ENCODE measurements at regions of chr10 and their contacts with region 1.

Region 1: DNA sequence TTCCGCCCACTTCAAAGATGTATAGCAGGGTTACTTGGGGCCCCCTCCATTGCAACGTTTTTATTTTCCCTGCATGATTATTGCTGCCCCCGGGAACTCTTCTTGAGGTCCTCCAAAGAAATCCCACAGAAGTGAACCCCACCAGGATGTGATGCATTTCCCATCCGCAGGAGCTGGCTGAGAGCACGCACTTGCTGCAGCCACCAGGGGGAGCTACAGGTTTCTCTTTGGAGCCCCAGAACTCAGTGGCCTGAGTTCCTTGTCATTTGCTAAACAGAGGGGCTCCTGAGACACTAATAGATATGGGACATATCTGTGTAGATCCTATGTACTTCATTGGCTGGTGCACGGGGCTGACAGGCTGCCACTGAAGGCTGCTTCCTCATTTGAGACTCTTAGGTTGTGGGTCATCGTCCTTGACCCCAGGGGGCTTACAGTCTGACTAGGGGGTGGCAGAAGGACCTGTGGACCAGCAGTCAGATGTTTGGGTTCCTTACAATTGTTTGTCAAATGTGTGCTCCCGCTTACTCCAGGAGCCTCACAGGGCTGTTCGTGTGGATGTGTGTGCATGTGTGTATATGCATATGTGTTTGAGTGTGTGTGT is 52.3 kb upstream of the ENO4 start:
- H3K4me3 Mint-ChIP-seq: no peak overlapping the region
- H3K27ac Mint-ChIP-seq: no peak overlapping the region
- H3K4me1 Mint-ChIP-seq: no peaks in the 10 kb centered on the region
- H3K27me3 Mint-ChIP-seq: peaks cover 39% of the 10 kb centered on the region

Region 2: DNA sequence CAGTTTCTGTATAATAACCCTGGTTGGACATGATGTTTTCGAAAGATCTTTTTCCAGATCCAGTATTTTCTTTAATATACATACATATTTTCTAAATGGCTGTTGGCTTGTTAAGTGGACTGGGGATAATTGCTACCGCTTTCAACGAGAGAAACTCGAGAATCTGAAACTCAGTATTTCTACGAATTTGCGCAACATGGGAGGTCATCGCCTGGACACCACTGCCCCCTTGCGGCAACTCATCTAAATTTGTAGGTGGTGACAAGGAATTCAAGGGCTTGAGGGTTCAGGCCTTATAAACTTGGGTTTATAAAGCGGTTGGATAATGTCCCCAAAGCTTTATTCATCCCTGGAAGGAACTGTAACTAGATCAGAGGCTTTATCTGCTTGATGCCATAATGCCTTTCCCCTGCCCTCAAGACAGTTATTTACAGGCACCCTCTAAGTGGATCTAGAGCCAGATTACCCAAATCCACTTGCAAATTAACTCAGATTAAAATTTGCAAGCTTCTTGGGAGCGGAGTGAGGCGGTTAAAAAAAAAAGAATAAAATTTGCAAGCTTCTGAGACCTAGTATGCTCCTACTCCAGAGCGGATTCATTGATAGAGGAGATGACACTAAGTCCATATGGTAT is 379.0 kb after region 1 on chr10:
- intact Hi-C with region 1: loop called (anchors 1 kb)
- H3K4me3 Mint-ChIP-seq: peak overlapping the region; percentile 66
- H3K27ac Mint-ChIP-seq: no peak overlapping the region
- H3K4me1 Mint-ChIP-seq: peaks cover 15% of the 10 kb centered on the region
- H3K27me3 Mint-ChIP-seq: peaks cover 72% of the 10 kb centered on the region